Activated CD4-positive, alpha-beta T cell treated with anti-CD3 and anti-CD28 coated beads, Interleukin-2, amount 10 ng/mL, durations not matched to agents 24 days and 14 days (primary cell): ENCODE measurements at regions of chr6 and their contacts with region 1.

Region 1: GRCh38 chr6:24991810-24992467 is 56.2 kb upstream of the RIPOR2 start:
- DNase-seq: peak; percentile 92
- H3K4me3 Mint-ChIP-seq: peak overlapping the region; percentile 34
- H3K27ac Mint-ChIP-seq: peak overlapping the region; percentile 85
- H3K4me1 Mint-ChIP-seq: peaks cover 42% of the 10 kb centered on the region
- H3K27me3 Mint-ChIP-seq: no peaks in the 10 kb centered on the region

Region 2: DNA sequence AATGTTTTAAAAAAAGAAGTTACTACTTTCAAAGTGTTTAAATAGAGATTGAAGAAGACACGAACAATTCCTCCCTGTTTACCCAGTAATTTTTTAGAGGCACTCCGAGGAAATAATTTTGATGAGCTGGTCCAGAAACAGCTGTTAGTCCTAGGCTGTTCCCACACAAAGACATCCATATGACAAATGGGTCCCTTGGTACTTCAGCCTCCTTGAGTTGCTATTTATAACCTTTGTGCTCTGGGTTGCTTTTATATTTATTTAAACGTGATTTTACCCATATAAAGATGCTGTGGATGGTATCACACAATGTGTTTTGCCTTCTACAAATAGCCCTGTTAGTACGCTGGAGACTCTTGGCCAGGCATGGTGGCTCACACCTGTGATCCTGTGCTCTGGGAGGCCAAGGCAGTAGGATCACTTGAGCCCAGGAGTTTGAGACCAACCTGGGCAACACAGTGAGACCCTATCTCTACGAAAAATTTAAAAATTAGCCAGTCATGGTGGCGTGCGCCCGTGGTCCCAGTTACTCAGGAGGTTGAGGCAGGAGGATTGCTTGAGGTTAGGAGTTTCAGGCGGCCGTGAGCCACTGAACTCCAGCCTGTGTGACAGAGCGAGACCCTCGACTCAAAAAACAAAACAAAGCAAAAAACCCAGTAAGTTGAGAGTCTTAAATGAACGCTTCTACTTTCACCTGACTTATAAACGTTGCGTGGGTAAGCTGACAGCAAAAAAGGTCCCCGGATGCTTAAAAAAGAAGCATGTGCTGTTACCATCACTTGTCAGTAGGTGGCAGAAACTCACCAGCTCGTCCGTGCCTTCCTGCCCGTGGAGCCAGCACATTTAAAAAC is 136.3 kb before region 1 on chr6:
- intact Hi-C with region 1: loop called (anchors 1 kb)
- DNase-seq: peak; percentile 91
- H3K4me3 Mint-ChIP-seq: peak overlapping the region; percentile 32
- H3K27ac Mint-ChIP-seq: peak overlapping the region; percentile 91
- H3K4me1 Mint-ChIP-seq: peaks cover 49% of the 10 kb centered on the region
- H3K27me3 Mint-ChIP-seq: no peaks in the 10 kb centered on the region

Region 3: GRCh38 chr6:24910961-24911712 is 80.8 kb before region 1 on chr6:
- intact Hi-C with region 1: loop called (anchors 1 kb)
- DNase-seq: peak; percentile 82
- H3K4me3 Mint-ChIP-seq: peak overlapping the region; percentile 86
- H3K27ac Mint-ChIP-seq: peak overlapping the region; percentile 93
- H3K4me1 Mint-ChIP-seq: peaks cover 75% of the 10 kb centered on the region
- H3K27me3 Mint-ChIP-seq: no peaks in the 10 kb centered on the region

Region 4: DNA sequence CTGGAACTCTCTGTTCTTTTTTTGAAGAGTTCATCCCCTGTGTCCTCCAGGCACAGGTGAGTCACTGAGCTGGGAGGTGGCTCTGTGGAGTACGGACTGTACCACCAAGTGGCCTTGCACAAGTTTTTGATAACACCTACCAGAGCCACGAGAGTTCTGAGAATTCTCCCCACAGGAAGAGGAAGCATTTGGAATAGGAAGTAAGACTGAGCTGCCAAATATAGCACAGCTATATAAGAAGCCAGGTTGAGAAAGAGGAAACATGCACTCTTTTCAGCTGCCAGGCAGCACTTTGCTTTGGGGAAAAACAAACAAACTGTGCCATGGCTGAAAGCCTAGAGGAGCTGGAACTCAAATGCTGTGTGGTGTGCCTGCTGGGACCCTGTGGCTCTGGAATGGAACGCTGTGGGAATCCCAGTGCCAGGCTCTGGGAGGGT is 14.6 kb after region 1 on chr6:
- intact Hi-C with region 1: loop called (anchors 2 kb)
- DNase-seq: peak; percentile 88
- H3K4me3 Mint-ChIP-seq: peak overlapping the region; percentile 64
- H3K27ac Mint-ChIP-seq: peak overlapping the region; percentile 93
- H3K4me1 Mint-ChIP-seq: peaks cover 58% of the 10 kb centered on the region
- H3K27me3 Mint-ChIP-seq: no peaks in the 10 kb centered on the region

Region 5: DNA sequence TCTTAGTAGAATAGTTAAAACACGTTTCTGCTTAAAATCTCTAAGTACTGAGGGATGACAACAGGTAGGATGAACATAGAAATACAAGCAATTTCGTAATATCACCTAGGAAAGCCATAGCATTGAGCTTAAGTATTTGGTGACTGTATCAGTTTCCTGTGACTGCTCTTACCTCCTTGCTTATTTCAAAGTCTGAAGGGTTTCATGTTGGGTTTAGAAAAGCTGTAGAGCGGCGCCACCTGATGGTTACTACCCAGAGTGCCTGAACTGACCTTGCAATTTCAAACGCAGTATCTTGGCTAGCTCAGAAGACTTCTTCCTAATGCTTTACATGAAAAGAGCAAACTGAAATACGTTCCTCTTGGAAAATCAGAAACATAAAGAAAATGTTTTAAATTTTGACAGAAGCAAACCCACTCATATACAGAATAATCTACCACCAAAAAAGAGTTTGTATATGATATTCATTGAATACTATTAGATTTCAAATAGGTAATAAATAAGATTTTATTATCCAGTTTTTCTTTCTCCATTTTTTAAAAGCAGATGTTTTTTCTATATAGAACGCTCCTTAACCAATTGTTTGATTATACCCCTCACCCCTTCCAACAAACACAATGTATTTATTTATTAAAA is 26.1 kb after region 1 on chr6:
- intact Hi-C with region 1: loop called (anchors 1 kb)
- DNase-seq: peak; percentile 93
- H3K4me3 Mint-ChIP-seq: peak overlapping the region; percentile 31
- H3K27ac Mint-ChIP-seq: peak overlapping the region; percentile 84
- H3K4me1 Mint-ChIP-seq: peaks cover 33% of the 10 kb centered on the region
- H3K27me3 Mint-ChIP-seq: no peaks in the 10 kb centered on the region